Activated CD4-positive, alpha-beta T cell treated with anti-CD3 and anti-CD28 coated beads, Interleukin-2, amount 10 ng/mL, durations not matched to agents 7 days and 5 days (primary cell): ENCODE measurements at regions of chr15 and their contacts with region 1.

Region 1: DNA sequence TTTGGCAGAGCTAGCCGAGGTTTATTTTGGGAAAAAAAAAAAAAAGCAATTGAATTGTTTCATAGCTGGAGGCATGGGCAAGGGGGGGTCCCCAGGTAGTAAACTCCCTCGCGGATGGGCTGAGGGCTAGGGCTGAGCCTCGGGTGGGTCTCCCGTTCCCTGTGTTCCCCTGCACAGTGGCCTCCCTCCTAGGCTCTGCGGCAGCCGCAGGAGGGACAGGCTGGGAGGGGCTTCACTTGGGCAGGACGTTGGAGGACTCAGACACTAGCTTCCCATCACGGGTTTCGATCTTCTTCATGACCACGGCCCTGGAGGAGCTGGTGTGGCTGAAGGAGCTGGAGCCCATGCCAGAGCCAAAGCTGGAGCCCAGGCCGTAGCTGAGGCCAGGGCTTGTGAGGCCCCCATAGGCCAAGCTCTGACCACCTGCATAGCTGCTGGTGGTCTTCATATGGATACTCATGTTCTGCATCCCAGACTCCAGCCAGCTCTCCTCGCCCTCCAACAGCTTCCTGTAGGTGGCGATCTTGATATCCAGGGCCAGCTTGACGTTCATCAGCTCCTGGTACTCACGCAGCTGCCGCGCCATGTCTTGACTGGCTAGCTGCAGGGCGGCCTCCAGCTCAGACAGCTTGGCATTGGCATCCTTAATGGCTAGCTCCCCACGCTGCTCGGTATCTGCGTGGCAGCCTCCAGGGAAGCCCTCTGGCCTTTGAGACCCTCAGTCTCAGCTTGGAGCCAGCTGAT is 64.0 kb upstream of the CDAN1 start:
- DNase-seq: peak; percentile 12
- H3K4me3 Mint-ChIP-seq: no peak overlapping the region
- H3K27ac Mint-ChIP-seq: no peak overlapping the region
- H3K4me1 Mint-ChIP-seq: peaks cover 14% of the 10 kb centered on the region
- H3K27me3 Mint-ChIP-seq: no peaks in the 10 kb centered on the region

Region 2: DNA sequence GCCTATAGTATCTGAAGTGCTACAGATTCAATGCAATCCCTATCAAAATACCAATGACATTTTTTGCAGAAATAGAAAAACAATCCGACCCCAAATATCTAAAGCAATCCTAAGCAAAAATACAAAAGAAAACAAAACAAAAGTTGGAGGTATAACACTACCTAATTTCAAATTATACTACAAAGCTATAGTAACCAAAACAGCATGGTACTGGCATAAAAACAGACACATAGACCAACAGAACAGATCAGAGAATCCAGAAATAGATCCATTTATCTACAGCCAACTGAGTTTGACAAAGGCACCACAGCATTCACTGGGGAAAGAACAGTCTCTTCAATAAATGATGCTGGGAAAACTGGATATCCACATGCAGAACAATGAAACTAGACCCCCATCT is 40.1 kb before region 1 on chr15:
- CTCF ChIA-PET with region 1: no interaction called
- POLR2A ChIA-PET with region 1: no interaction called
- DNase-seq: no peak
- H3K4me3 Mint-ChIP-seq: no peak overlapping the region
- H3K27ac Mint-ChIP-seq: no peak overlapping the region
- H3K4me1 Mint-ChIP-seq: no peaks in the 10 kb centered on the region
- H3K27me3 Mint-ChIP-seq: no peaks in the 10 kb centered on the region

Region 3: GRCh38 chr15:42880121-42880520 is 79.2 kb after region 1 on chr15:
- CTCF ChIA-PET with region 1: no interaction called
- POLR2A ChIA-PET with region 1: no interaction called
- DNase-seq: no peak
- H3K4me3 Mint-ChIP-seq: no peak overlapping the region
- H3K27ac Mint-ChIP-seq: no peak overlapping the region
- H3K4me1 Mint-ChIP-seq: no peaks in the 10 kb centered on the region
- H3K27me3 Mint-ChIP-seq: no peaks in the 10 kb centered on the region

Region 4: GRCh38 chr15:42933886-42934667 is 133.2 kb after region 1 on chr15:
- CTCF ChIA-PET with region 1: no interaction called
- POLR2A ChIA-PET with region 1: no interaction called
- DNase-seq: no peak
- H3K4me3 Mint-ChIP-seq: no peak overlapping the region
- H3K27ac Mint-ChIP-seq: no peak overlapping the region
- H3K4me1 Mint-ChIP-seq: no peaks in the 10 kb centered on the region
- H3K27me3 Mint-ChIP-seq: no peaks in the 10 kb centered on the region

Region 5: DNA sequence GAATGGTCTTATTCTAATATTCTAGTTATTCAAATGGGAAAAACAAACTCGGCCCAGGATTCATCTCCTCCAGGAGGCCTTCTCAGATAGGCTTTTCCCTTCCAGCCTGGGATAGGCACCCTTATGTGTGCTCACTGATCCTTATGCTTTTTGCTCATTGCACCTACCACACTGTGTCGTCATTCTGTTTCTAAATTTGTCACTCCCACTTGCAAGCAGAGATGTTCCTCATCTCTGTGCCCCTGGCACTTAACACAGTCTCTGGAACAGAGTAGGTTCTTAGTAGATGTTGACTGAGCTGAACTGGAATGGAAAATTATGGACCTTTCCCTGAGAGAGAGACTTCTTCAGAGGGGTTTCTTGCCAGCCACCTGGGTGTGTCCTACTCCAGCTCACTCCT is 1881.3 kb after region 1 on chr15:
- CTCF ChIA-PET with region 1: no interaction called
- POLR2A ChIA-PET with region 1: interaction called, 10 read pairs
- DNase-seq: no peak
- H3K4me3 Mint-ChIP-seq: peak overlapping the region; percentile 65
- H3K27ac Mint-ChIP-seq: peak overlapping the region; percentile 92
- H3K4me1 Mint-ChIP-seq: peaks cover 86% of the 10 kb centered on the region
- H3K27me3 Mint-ChIP-seq: no peaks in the 10 kb centered on the region